Panc1 (cell line): ENCODE measurements at regions of chr7 and their contacts with region 1.

Region 1: DNA sequence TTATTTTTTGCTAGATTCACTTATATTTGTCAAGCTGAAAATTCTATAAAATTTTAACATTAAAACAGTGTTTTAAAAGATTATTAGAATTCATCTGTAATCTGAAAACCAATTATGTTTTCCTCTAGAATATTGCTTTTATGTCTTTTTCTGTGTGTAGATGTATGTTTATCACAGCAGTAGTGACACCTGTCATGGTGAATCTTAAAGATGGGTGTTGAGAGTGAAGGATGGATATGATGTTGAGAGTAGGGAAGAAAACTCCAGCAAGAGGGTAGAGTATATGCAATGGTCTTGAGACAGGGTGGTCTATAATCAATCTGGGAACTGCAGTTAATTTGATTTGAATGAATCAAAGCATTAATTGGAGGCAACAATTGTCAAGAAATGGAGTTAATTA is 336.9 kb upstream of the CDC14C start:
- DNase-seq: no peak
- ATAC-seq: no peak
- H3K4me3 ChIP-seq: no peak overlapping the region
- H3K27ac ChIP-seq: no peak overlapping the region
- H3K4me1 ChIP-seq: no peaks in the 10 kb centered on the region
- H3K27me3 ChIP-seq: no peaks in the 10 kb centered on the region
- CTCF ChIP-seq: no peak

Region 2: DNA sequence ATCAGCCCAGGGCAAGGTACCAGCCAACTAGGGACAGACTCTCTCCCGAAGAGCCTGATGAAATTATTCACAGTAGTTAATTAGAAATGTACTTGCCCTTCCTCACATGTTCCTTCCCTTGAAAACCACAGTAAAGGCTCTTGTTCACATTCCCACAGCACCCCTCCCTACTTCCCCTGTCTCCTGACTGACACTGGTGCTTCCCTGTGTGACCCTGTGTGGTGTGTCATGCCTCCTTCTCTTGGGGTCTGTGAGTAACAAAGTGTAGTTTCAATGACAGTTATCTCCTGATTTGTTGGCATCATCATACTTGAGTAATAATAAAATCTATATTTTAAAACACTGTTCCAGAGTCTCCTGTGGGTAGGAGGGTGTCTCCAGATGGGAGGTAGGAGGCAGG is 206.6 kb before region 1 on chr7:
- CTCF ChIA-PET with region 1: no interaction called
- POLR2A ChIA-PET with region 1: no interaction called
- in situ Hi-C with region 1: no loop called
- intact Hi-C with region 1: no loop called
- DNase-seq: no peak
- ATAC-seq: no peak
- H3K4me3 ChIP-seq: no peak overlapping the region
- H3K27ac ChIP-seq: no peak overlapping the region
- H3K4me1 ChIP-seq: no peaks in the 10 kb centered on the region
- H3K27me3 ChIP-seq: no peaks in the 10 kb centered on the region
- CTCF ChIP-seq: no peak

Region 3: GRCh38 chr7:48471196-48471595 is 116.3 kb before region 1 on chr7:
- CTCF ChIA-PET with region 1: no interaction called
- POLR2A ChIA-PET with region 1: no interaction called
- in situ Hi-C with region 1: no loop called
- intact Hi-C with region 1: no loop called
- DNase-seq: no peak
- ATAC-seq: no peak
- H3K4me3 ChIP-seq: no peak overlapping the region
- H3K27ac ChIP-seq: peak overlapping the region; percentile 67
- H3K4me1 ChIP-seq: peaks cover 18% of the 10 kb centered on the region
- H3K27me3 ChIP-seq: no peaks in the 10 kb centered on the region
- CTCF ChIP-seq: no peak

Region 4: DNA sequence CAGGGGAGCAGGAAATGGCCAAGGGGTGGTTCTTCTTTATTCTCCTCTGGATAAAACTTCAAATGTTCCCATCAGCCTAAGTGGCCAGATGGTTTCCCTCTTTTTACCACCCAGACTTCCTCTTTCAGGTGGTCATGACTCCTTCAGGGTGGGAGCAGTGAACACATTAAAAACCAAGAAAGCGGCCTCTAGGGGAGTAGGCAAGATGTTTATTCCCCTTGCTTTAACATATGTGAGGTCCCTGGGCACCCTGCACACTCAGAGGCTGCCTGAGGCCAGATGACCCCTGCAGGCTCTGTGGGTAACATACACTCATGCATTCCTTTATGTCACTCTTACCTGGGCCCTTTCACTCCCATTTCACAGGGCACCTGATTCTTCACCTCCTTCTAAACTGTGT is 58.8 kb before region 1 on chr7:
- CTCF ChIA-PET with region 1: no interaction called
- POLR2A ChIA-PET with region 1: no interaction called
- in situ Hi-C with region 1: no loop called
- intact Hi-C with region 1: loop called (anchors 10 kb)
- DNase-seq: no peak
- ATAC-seq: peak; percentile 72
- H3K4me3 ChIP-seq: no peak overlapping the region
- H3K27ac ChIP-seq: no peak overlapping the region
- H3K4me1 ChIP-seq: no peaks in the 10 kb centered on the region
- H3K27me3 ChIP-seq: no peaks in the 10 kb centered on the region
- CTCF ChIP-seq: no peak